ENCODE measurements at regions of chr5 and their contacts with region 1.

Region 1: GRCh38 chr5:56838409-56839039 is 23.2 kb downstream of the MAP3K1 start:
- DNase-seq: peak; percentile 42
- ATAC-seq: peak; percentile 85
- H3K4me3 ChIP-seq: no peak overlapping the region; the same call in 1 of the 2 replicates
- H3K27ac ChIP-seq: no peak overlapping the region
- H3K4me1 ChIP-seq: peaks cover 8% of the 10 kb centered on the region; the same call in 1 of the 2 replicates
- H3K27me3 ChIP-seq: no peaks in the 10 kb centered on the region
- CTCF ChIP-seq: peak; percentile 41 to 78 (median 52); a peak in 5 of 6 replicates
- EP300 ChIP-seq: no peak
- POLR2A ChIP-seq: no peak
- RAD21 ChIP-seq: peak; percentile 79

Region 2: DNA sequence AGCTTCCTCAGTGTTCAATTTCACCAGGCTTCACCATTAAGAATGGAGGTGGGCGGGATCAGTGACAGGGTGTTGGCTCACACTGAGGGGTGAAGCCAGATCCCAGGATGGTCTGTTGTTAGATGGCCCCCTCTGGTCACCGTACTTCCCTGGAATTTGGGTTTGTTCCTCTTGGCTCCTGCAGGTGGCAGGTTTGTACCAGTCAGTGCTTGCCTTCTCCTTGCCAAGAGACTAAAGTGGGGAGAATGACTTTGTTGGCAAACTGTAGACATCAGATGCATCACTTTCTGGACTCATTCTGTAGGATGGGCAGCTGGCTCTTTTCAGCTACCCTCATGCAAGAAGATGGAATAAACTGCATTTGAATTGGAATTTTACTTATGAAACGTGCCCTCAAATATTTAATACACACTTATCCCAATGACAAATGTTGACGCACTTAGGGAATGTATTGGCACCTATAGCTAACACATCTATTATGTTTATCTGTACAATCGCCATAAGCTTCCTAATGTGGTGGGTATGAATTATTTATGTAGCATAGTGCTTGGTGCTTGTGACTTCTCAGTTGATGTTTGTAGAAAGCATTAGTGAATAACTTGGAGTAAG is 574.0 kb before region 1 on chr5:
- CTCF ChIA-PET with region 1: interaction called, 296 read pairs
- POLR2A ChIA-PET with region 1: no interaction called
- RAD21 ChIA-PET with region 1: interaction called, 174 read pairs
- SMC1A ChIA-PET with region 1: interaction called, 164 read pairs
- in situ Hi-C with region 1: no loop called
- intact Hi-C with region 1: no loop called
- DNase-seq: no peak
- ATAC-seq: peak; percentile 72
- H3K4me3 ChIP-seq: no peak overlapping the region
- H3K27ac ChIP-seq: no peak overlapping the region
- H3K4me1 ChIP-seq: no peaks in the 10 kb centered on the region
- H3K27me3 ChIP-seq: no peaks in the 10 kb centered on the region; a peak in 1 of 4 replicates
- CTCF ChIP-seq: peak; percentile 47 to 71 (median 66)
- EP300 ChIP-seq: no peak
- POLR2A ChIP-seq: no peak
- RAD21 ChIP-seq: peak; percentile 74

Region 3: DNA sequence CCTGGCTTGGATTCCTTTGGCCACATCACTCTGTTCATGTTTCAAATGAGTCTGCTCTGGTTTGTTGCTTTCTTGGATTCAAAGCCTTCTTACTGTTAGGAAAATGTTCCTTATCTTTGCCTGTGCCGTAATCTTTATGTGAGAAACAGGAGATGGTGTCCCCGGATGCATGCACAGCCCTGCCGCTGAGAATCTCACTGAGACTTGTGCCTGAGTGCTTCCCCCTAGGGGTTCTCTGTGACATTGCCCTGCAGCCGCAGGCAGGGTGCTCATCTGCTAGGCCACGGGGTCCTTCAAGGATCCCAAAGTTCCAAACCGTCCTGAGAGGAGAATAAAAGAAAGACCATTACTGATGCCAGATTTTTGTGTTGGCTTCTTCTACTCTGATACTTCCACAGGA is 524.0 kb before region 1 on chr5:
- CTCF ChIA-PET with region 1: interaction called, 11 read pairs
- POLR2A ChIA-PET with region 1: no interaction called
- RAD21 ChIA-PET with region 1: interaction called, 3 read pairs
- SMC1A ChIA-PET with region 1: interaction called, 15 read pairs
- in situ Hi-C with region 1: no loop called
- intact Hi-C with region 1: no loop called
- DNase-seq: no peak
- ATAC-seq: peak; percentile 85
- H3K4me3 ChIP-seq: no peak overlapping the region
- H3K27ac ChIP-seq: no peak overlapping the region
- H3K4me1 ChIP-seq: peaks cover 15% of the 10 kb centered on the region
- H3K27me3 ChIP-seq: no peaks in the 10 kb centered on the region
- CTCF ChIP-seq: peak; percentile 62 to 96 (median 91)
- EP300 ChIP-seq: no peak
- POLR2A ChIP-seq: no peak
- RAD21 ChIP-seq: peak; percentile 64

Region 4: DNA sequence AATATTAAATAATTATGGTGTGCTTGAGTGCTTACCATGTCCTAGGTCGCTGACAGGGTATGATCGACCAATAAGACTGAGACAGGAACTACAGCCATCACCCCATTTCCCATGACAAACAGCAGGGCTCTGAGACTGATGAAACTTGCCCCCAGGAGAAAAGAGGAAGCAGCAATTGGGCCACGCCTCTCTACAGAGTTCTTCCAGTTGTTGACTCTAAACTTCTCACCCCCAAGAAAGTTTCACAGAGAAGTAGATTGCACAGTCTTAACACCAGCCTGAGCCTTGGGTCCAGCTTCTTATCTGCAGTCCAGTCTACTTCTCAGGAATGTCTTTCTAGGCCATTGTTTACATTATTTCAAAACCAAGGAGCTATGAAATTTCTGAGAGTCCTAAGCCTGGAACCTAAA is 423.2 kb before region 1 on chr5:
- CTCF ChIA-PET with region 1: interaction called, 18 read pairs
- POLR2A ChIA-PET with region 1: interaction called, 3 read pairs
- RAD21 ChIA-PET with region 1: interaction called, 8 read pairs
- SMC1A ChIA-PET with region 1: interaction called, 14 read pairs
- in situ Hi-C with region 1: no loop called
- intact Hi-C with region 1: loop called (anchors 5 kb)
- DNase-seq: peak; percentile 92
- ATAC-seq: peak; percentile 84
- H3K4me3 ChIP-seq: peak overlapping the region; percentile 48; the same call in 1 of the 2 replicates
- H3K27ac ChIP-seq: peak overlapping the region; percentile 79
- H3K4me1 ChIP-seq: peaks cover 40% of the 10 kb centered on the region
- H3K27me3 ChIP-seq: no peaks in the 10 kb centered on the region
- CTCF ChIP-seq: no peak
- EP300 ChIP-seq: peak in 1 of 2 experiments; percentile 39; a peak in 2 of 4 replicates
- POLR2A ChIP-seq: 0 out of 2 replicates have a peak, but pooled peaks have one; percentile 26
- RAD21 ChIP-seq: 0 out of 2 replicates have a peak, but pooled peaks have one; percentile 10

Region 5: DNA sequence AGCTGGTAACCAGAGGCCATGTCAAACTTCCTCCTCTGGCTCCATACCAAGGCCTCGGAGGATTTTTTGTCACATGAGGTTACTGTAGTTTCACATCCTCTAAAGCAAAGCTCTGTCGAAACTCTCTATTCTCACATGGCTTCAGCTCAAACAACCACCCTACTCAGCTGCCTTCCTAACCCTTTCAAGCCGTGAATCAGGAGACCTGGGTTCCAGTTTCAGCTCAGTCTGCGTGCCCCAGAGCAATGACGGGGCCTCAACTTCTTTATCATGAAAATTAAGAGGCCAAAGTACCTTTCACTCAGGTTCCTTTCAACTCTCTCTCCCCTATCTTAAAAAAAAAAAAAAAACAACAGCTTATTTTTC is 168.4 kb before region 1 on chr5:
- CTCF ChIA-PET with region 1: interaction called, 14 read pairs
- POLR2A ChIA-PET with region 1: no interaction called
- RAD21 ChIA-PET with region 1: interaction called, 20 read pairs
- SMC1A ChIA-PET with region 1: interaction called, 15 read pairs
- in situ Hi-C with region 1: no loop called
- intact Hi-C with region 1: no loop called
- DNase-seq: peak; percentile 98
- ATAC-seq: peak; percentile 97
- H3K4me3 ChIP-seq: no peak overlapping the region
- H3K27ac ChIP-seq: no peak overlapping the region
- H3K4me1 ChIP-seq: peaks cover 22% of the 10 kb centered on the region
- H3K27me3 ChIP-seq: no peaks in the 10 kb centered on the region
- CTCF ChIP-seq: no peak
- EP300 ChIP-seq: peak; percentile 92 to 96
- POLR2A ChIP-seq: no peak
- RAD21 ChIP-seq: no peak; the same call in 1 of the 2 replicates

Region 6: DNA sequence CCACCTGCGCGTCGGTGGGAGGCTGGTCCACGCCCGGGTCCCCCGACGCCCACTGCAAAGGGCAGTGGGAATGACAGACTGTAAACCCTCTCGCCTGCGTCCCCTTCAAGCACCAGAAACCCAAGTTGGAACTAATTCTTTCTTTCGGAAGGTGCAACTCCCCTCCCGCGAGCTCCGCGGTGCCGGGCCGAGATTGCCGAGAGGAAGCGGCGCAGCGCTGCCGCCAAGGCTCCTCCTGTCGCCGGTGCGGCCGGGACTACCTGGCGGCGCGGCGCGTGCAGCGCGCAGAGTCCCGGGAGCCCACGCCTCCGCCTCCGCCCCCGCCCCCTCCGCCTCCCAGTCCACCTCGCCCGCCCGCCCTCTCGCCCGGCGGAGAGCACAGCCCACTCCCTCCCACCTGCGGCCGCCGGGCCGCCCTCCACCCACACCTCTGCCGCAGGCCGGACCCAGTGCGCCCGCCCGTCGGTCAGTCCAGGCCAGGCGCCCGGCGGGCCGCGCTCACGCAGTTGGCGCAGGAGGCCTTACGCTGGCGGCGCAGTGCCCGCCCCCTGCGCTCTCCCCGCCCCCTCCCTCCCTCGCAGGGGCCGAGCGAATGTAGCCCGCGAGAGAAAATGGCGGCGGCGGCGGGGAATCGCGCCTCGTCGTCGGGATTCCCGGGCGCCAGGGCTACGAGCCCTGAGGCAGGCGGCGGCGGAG is 23.4 kb before region 1 on chr5 and contains the start of gene MAP3K1:
- CTCF ChIA-PET with region 1: interaction called, 38 read pairs
- POLR2A ChIA-PET with region 1: interaction called, 5 read pairs
- RAD21 ChIA-PET with region 1: interaction called, 21 read pairs
- SMC1A ChIA-PET with region 1: interaction called, 64 read pairs
- in situ Hi-C with region 1: no loop called
- intact Hi-C with region 1: no loop called
- DNase-seq: no peak
- ATAC-seq: peak; percentile 63
- H3K4me3 ChIP-seq: peak within 1 kb of the TSS; percentile 97
- H3K27ac ChIP-seq: peak within 1 kb of the TSS; percentile 78
- H3K4me1 ChIP-seq: peaks cover 23% of the 10 kb centered on the region
- H3K27me3 ChIP-seq: no peaks in the 10 kb centered on the region
- CTCF ChIP-seq: peak in 1 of 3 experiments; percentile 22; a peak in 2 of 6 replicates
- EP300 ChIP-seq: no peak
- POLR2A ChIP-seq: peak; percentile 63
- RAD21 ChIP-seq: no peak
- polyA plus RNA-seq, gene MAP3K1: 7.5 to 12.1 TPM

Region 7: DNA sequence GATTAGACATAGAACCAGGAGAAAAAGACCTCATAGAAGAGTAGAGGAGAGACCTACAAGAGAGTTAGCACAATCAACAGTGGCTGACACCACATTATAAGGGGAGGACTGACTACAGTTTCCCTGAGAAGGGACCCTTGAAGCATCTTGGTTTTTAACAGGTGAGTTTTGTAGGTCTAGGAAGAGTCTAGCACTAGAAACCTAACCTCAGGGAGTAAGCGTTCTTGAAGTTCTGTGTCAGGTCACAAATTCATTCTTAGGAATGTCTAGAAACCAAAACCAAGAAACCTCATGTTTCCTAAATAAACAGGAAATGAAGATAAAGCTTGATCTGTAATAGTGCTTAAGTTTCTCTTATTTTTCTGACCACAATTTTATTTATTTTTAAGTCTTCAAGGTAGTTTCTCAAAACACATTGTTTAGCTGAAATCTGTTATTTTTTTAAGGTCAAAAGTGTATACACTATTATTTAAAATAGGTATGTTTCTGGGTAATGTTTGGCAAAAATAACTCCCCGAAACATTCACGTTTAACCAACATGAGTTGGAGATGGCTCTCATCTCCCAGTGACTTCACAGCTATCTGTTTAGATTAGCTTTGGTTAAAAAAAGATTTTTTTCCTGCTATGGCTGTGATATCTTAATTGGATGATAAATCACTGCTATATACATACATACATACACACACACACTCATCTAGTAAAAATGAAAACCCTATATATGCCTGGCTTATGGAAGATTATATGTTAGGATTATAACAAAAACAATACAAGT is 13.9 kb after region 1 on chr5:
- CTCF ChIA-PET with region 1: interaction called, 12 read pairs
- POLR2A ChIA-PET with region 1: no interaction called
- RAD21 ChIA-PET with region 1: interaction called, 10 read pairs
- SMC1A ChIA-PET with region 1: interaction called, 21 read pairs
- in situ Hi-C with region 1: no loop called
- intact Hi-C with region 1: no loop called
- DNase-seq: no peak
- ATAC-seq: peak; percentile 41
- H3K4me3 ChIP-seq: no peak overlapping the region
- H3K27ac ChIP-seq: no peak overlapping the region
- H3K4me1 ChIP-seq: no peaks in the 10 kb centered on the region
- H3K27me3 ChIP-seq: no peaks in the 10 kb centered on the region
- CTCF ChIP-seq: no peak
- EP300 ChIP-seq: no peak
- POLR2A ChIP-seq: no peak
- RAD21 ChIP-seq: no peak